ENCODE measurements at regions of chr12 and their contacts with region 1.

Region 1: GRCh38 chr12:5171701-5172100 is 128.0 kb downstream of the KCNA5 start:
- DNase-seq: peak in 1 of 10 donors; percentile 18

Region 2: DNA sequence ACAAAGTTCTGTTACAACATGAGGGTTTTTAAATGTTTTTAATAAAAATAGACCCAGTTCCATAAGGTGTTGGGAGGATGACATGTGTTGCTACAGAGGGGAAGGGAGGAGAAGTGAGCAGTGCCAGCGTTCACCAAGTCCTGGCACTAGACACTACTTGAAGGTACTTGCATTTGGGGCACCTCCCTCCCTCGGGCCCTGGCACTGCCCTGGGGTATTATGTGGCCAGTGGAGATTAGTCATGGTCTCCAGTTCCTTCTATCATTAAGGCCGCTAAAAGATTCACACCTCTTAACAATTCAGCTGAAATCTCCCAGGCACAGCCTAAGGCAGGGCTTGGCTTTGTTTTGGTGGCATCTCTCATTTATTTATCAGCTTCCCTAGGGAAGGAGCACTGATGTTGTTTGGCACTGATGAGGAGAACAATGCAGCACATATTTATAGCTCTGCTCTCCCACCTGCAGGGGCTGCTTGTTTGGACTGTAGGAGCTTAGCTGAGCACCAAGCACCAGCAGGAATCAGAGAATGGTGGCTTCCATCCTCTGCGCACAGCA is 104.7 kb after region 1 on chr12:
- intact Hi-C with region 1: no loop called
- DNase-seq: no peak

Region 3: DNA sequence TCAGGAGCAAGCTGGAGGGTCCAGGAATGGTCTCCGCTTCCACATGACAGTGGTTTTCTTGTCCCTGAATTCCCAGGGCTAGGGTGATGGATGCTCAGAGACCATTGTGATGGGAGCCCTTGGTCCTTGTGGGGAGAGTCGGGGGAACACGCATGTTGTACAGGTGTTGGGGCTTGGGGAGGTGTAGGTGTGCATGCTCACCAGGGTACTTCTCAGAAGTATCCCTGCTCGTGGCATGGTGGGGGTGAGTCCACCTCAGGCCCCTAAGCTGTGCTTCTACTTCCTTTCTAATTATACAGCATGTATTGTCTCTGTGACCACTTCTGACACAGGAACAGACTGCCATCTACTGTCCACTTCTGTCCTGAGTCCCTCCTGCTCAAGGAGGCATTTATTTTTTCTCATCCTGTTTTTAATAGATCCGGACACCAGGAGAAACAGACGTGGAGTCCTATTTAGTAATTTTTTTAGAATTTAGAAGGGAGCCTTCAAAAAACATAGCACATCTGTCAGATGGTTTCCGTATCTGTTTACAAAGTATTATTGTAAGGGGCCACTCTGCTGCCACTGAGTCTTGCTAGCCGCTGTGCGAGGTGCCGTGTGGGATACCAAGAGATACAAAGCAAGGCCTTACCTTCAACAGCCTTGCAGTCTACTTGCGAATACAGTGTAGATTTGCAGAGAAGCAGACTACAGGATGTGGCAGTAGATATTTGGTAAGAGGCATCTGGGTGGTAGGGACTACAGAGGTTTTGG is 270.7 kb after region 1 on chr12:
- intact Hi-C with region 1: loop called (anchors 5 kb)
- DNase-seq: peak in 1 of 10 donors; percentile 18

Measured in posterior cingulate gyrus (tissue), 11 donors.